ENCODE measurements at regions of chr13 and their contacts with region 1.

Region 1: GRCh38 chr13:80705371-80706163 is 364.6 kb upstream of the SPRY2 start:
- DNase-seq: peak; percentile 37

Region 2: GRCh38 chr13:79496188-79496587 is 1209.4 kb before region 1 on chr13:
- intact Hi-C with region 1: loop called in 1 of 2 experiments (anchors 5 kb)
- DNase-seq: no peak

Region 3: DNA sequence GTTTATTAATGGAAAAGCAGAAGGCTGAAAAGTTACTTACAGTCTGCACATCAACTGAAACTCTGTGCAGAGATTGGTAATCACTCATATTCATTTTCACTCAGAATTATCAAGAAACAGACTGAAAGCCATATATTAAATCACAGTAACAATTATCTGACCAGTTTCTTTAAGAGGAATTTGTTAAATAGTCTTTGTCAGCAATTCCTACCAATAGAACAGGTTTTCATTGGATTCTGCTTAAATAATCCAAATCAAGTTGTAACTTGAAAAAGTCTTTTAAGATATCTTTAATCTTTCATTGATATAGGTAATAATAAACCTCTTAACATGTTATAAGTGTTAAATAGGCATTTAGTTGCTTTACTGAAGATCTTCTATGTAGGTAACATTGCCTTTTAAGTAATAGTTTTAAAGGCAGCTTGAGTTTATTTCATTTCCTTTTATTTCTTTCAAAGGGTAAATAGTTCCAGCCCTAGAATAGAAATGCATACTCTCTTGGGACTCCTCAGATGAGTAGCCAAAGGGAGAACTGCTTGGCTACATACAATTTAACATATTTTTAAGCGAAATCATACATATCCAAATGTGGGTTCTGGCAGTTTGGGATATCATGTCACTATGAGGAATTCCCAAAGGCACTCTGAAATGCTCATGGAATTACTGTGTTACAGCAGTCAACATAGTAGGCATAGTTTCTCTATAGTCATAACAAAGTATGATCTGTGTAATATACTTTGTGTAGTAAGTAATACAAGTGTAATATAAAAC is 38.6 kb before region 1 on chr13:
- intact Hi-C with region 1: loop called in 1 of 2 experiments (anchors 2 kb)
- DNase-seq: no peak

Measured in posterior vena cava (tissue), 2 donors.